OCI-LY7 (cell line): ENCODE measurements at regions of chr2 and their contacts with region 1.

Region 1: GRCh38 chr2:71068218-71069035 is at the start of gene NAGK:
- DNase-seq: peak; percentile 96
- H3K4me3 ChIP-seq: peak within 1 kb of the TSS; percentile 94
- H3K27ac ChIP-seq: peak within 1 kb of the TSS; percentile 99
- H3K4me1 ChIP-seq: peaks cover 80% of the 10 kb centered on the region
- CTCF ChIP-seq: peak; percentile 33; the same call in 1 of the 2 replicates
- total RNA-seq, gene NAGK: 79.7 and 97.8 TPM in 2 replicates

Region 2: DNA sequence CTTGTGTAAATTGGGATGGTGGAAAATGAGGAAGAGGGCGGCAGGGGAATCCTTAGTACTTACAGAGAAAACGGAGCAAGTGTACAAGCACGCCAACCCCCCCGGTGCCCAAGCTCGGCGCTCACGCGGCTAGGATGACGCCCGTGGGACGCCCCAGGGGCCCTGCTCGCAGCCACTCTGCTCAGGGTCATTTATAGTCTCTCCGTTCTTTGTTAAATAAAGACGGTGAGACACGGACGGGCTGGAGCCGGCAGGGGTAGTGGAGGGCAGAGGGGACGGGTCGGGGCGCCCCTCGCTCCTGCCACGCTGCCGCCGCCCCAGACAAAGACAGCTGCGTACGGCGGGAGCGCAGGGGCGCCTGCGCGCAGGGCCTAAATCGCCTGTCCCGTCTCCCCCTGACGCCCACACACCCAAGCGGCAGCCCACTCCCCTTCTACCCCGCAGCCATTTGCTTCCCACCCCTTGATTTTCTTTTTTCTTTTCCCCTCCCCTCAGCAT is 943.4 kb before region 1 on chr2:
- CTCF ChIA-PET with region 1: no interaction called
- POLR2A ChIA-PET with region 1: no interaction called
- intact Hi-C with region 1: loop called (anchors 10 kb)
- DNase-seq: peak; percentile 65
- H3K4me3 ChIP-seq: peak overlapping the region; percentile 63
- H3K27ac ChIP-seq: peak overlapping the region; percentile 83
- H3K4me1 ChIP-seq: peaks cover 89% of the 10 kb centered on the region
- CTCF ChIP-seq: no peak

Region 3: DNA sequence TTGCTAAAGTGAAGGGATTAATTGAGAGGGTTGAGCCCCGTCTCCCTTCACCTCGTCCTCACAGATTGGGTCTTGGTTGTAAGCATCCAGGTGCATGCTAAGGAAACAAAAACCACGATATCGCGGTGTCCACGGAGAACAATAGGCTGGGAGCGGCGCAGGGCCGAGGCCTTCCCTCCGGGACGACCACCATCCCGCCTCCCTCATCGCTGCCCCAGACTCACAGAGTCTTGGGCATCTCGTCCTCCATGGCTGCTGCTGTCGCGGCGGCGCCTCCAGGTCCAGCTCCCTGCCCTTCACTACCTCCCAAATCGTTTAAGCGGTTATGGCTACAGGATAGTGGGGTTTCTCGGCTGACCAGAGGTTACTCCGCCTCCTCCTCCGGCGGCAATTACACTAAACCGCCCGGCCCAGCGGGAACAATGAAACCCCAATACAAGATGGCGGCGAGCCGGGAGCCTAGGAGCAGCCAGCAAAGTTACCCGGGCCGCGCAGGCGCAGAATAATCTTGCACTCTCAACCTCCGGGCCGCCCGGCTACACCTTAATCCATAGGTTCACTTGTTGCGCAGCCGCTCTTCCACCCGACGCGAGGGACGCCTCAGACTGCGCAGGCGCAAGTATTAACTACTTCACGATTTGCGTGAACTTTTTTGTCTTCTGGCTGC is 820.1 kb before region 1 on chr2 and contains the start of gene TIA1:
- CTCF ChIA-PET with region 1: no interaction called
- POLR2A ChIA-PET with region 1: no interaction called
- intact Hi-C with region 1: loop called (anchors 5 kb)
- DNase-seq: peak; percentile 100
- H3K4me3 ChIP-seq: peak within 1 kb of the TSS; percentile 86
- H3K27ac ChIP-seq: peak within 1 kb of the TSS; percentile 86
- H3K4me1 ChIP-seq: peaks cover 29% of the 10 kb centered on the region
- CTCF ChIP-seq: no peak
- total RNA-seq, gene TIA1: 129 and 147 TPM in 2 replicates

Region 4: DNA sequence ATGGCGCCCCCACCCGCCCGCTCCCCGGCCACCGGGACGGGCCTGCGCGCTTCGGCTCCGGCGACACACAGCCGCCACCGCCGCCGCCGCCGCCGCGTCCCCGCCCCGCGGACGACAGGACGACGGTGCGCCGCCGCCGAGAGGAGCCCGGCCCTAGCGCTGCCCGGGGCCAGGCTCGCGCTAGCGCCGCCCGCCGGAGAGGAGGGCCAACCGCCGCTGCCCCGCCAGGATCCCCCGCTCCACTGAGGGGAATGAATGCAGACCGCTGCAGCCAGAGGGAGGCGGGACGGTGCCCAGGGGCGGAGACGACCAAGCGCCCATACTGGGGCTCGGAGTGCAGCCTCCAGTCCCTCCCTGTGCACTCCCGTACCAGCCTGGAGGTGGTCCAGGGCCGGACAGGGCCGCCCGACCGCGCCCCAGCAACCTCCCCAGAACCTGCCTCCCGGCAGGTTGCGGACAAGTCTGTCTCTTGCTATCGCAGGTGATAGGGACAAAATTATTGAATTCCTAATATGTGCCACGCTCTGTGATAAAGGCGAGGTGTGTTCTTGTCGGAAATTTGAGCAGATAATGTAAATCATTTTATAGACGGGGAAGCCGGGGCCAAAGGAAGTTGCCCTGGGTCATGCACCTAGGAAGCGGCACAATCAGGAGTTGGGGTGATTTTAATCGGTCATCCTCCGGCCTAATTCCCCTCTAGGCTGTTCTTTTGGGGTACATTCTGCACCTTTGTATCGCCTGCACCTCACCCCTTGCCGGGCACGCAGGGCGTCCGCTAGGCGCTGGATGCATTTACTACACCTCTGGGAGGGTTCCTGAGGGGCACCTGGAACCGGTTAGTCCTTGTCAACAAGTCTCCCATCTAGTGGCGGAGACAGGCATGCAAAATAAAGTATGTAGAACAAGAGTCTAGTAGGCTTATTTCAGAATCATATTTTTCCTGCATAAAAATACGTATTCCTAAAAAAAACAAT is 73.4 kb before region 1 on chr2 and contains the start of gene TEX261:
- CTCF ChIA-PET with region 1: no interaction called
- POLR2A ChIA-PET with region 1: interaction called, 3 read pairs
- intact Hi-C with region 1: loop called (anchors 2 kb)
- DNase-seq: peak; percentile 91
- H3K4me3 ChIP-seq: peak within 1 kb of the TSS; percentile 100
- H3K27ac ChIP-seq: peak within 1 kb of the TSS; percentile 69
- H3K4me1 ChIP-seq: peaks cover 19% of the 10 kb centered on the region
- CTCF ChIP-seq: peak; percentile 75
- total RNA-seq, gene TEX261: 26.7 and 34.5 TPM in 2 replicates

Region 5: GRCh38 chr2:71018625-71019024 is 49.8 kb before region 1 on chr2:
- CTCF ChIA-PET with region 1: interaction called, 5 read pairs
- POLR2A ChIA-PET with region 1: interaction called, 9 read pairs
- intact Hi-C with region 1: loop called (anchors 2 kb)
- DNase-seq: no peak
- H3K4me3 ChIP-seq: no peak overlapping the region
- H3K27ac ChIP-seq: no peak overlapping the region
- H3K4me1 ChIP-seq: peaks cover 6% of the 10 kb centered on the region
- CTCF ChIP-seq: no peak

Region 6: DNA sequence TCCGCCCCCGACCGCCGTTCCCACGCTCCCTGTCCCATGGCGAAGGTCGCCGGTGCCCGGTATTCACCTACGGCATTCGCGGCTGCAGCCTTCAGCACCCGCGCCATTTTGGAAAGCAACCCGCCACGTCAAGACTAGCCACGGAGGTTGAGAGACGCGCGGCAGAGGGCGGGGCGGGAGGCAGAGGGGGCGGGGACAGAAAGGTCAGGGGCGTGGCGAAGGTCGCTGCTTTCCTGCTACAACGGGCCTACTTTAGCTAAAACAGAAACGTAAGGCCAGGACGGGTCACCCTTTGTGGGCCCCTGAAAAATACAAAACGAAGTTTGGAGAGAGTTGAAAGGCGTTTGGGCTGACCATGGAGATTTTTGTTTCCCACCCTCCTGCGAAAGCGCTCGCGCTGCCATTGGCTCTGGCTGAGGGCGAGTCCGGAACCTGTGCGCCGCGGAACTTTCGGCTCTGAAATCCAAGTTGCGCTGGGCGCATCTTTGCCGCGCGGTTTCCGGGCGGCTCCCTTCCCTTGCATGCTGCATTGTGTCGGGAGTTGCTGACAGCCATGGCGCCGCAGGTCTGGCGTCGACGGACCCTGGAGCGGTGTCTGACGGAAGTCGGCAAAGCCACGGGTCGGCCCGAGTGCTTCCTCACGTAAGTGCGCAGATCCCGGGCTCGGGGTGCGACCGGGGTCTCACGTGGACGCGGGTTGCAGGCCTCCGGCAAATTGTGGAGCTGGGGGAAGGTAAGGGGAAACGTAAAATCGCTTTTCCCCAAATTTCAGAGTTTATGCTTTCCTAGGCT is 61.9 kb after region 1 on chr2 and contains the starts of genes MCEE and MPHOSPH10:
- CTCF ChIA-PET with region 1: interaction called, 6 read pairs
- POLR2A ChIA-PET with region 1: interaction called, 11 read pairs
- intact Hi-C with region 1: loop called (anchors 1 kb)
- DNase-seq: peak; percentile 90
- H3K4me3 ChIP-seq: peak within 1 kb of the TSS; percentile 95
- H3K27ac ChIP-seq: peak within 1 kb of the TSS; percentile 80
- H3K4me1 ChIP-seq: peaks cover 37% of the 10 kb centered on the region
- CTCF ChIP-seq: no peak
- total RNA-seq, gene MCEE: 30.8 and 35.4 TPM in 2 replicates
- total RNA-seq, gene MPHOSPH10: 18.7 and 31.5 TPM in 2 replicates

Region 7: DNA sequence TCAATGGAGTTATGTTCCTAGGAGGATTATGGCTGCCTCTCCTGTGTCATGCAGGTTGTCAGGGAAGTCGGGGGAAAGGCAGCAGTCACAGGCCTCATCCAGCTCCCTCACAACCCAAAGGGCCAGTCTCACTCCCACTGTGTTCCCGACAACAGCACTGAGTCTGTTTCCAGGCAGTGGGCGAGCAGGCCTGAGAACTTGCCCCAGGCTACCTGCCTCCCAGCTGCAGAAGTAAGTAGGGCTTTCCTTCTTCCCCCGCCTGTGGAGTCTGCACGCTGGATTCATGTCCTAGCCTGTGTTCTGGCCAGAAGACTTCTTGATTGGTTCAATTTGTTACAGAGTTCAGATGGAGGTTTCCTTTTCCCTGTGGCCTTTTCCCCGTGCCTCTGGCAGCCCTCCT is 255.0 kb after region 1 on chr2:
- CTCF ChIA-PET with region 1: no interaction called
- POLR2A ChIA-PET with region 1: no interaction called
- intact Hi-C with region 1: no loop called
- DNase-seq: no peak
- H3K4me3 ChIP-seq: no peak overlapping the region
- H3K27ac ChIP-seq: no peak overlapping the region
- H3K4me1 ChIP-seq: no peaks in the 10 kb centered on the region
- CTCF ChIP-seq: no peak